ENCODE measurements at regions of chr10 and their contacts with region 1.

Region 1: GRCh38 chr10:58299580-58299979 is 30.6 kb downstream of the CISD1 start:
- DNase-seq: peak; percentile 61
- ATAC-seq: peak; percentile 80
- H3K4me3 Mint-ChIP-seq: no peak overlapping the region
- H3K27ac Mint-ChIP-seq: no peak overlapping the region
- H3K4me1 Mint-ChIP-seq: no peaks in the 10 kb centered on the region
- H3K27me3 Mint-ChIP-seq: peaks cover 21% of the 10 kb centered on the region

Region 2: GRCh38 chr10:58184120-58184670 is 115.4 kb before region 1 on chr10:
- CTCF ChIA-PET with region 1: no interaction called
- DNase-seq: no peak
- ATAC-seq: no peak
- H3K4me3 Mint-ChIP-seq: no peak overlapping the region
- H3K27ac Mint-ChIP-seq: no peak overlapping the region
- H3K4me1 Mint-ChIP-seq: no peaks in the 10 kb centered on the region
- H3K27me3 Mint-ChIP-seq: peaks cover 16% of the 10 kb centered on the region

Region 3: GRCh38 chr10:58282615-58283014 is 17.0 kb before region 1 on chr10:
- CTCF ChIA-PET with region 1: no interaction called
- DNase-seq: peak; percentile 51
- ATAC-seq: peak; percentile 92
- H3K4me3 Mint-ChIP-seq: peak overlapping the region; percentile 72
- H3K27ac Mint-ChIP-seq: peak overlapping the region; percentile 89
- H3K4me1 Mint-ChIP-seq: peaks cover 42% of the 10 kb centered on the region
- H3K27me3 Mint-ChIP-seq: no peaks in the 10 kb centered on the region

Region 4: GRCh38 chr10:58393317-58393716 is 93.7 kb after region 1 on chr10:
- CTCF ChIA-PET with region 1: interaction called, 10 read pairs
- DNase-seq: no peak
- ATAC-seq: no peak
- H3K4me3 Mint-ChIP-seq: no peak overlapping the region
- H3K27ac Mint-ChIP-seq: no peak overlapping the region
- H3K4me1 Mint-ChIP-seq: peaks cover 11% of the 10 kb centered on the region
- H3K27me3 Mint-ChIP-seq: no peaks in the 10 kb centered on the region

Region 5: GRCh38 chr10:58424176-58424575 is 124.6 kb after region 1 on chr10:
- CTCF ChIA-PET with region 1: no interaction called
- DNase-seq: no peak
- ATAC-seq: no peak
- H3K4me3 Mint-ChIP-seq: no peak overlapping the region
- H3K27ac Mint-ChIP-seq: no peak overlapping the region
- H3K4me1 Mint-ChIP-seq: no peaks in the 10 kb centered on the region
- H3K27me3 Mint-ChIP-seq: peaks cover 11% of the 10 kb centered on the region

Measured in activated CD8-positive, alpha-beta memory T cell treated with anti-CD3 and anti-CD28 coated beads, Interleukin-2, amount 10 ng/mL, durations not matched to agents 7 days and 5 days (primary cell).